Lower leg skin (tissue), 4 donors: ENCODE measurements at regions of chr3 and their contacts with region 1.

Region 1: DNA sequence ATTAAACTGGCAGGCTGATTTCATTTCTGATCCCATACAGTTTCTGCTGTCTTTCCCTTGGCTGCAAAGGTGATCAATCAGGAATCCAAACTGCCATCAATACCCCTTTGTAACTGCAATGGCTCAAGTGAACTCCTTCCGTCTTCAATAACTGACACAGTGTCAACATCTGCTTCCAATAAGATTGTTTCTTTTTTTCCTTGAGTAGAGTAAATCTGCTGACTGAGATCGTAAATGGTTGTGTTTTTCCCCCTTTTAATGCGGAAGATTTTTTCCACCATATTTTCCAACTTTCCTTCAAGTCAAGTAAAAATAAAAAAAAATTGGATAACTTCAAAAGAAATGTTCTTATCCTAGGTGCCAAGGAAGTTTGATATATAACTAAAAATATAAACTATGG is 48.7 kb downstream of the VGLL3 start:
- DNase-seq: no peak
- H3K4me3 ChIP-seq: no peak overlapping the region
- CTCF ChIP-seq: no peak
- POLR2A ChIP-seq: no peak

Region 2: GRCh38 chr3:87004883-87005282 is 62.7 kb after region 1 on chr3:
- intact Hi-C with region 1: loop called (anchors 2 kb)
- DNase-seq: no peak
- H3K4me3 ChIP-seq: no peak overlapping the region
- CTCF ChIP-seq: no peak
- POLR2A ChIP-seq: no peak

Region 3: DNA sequence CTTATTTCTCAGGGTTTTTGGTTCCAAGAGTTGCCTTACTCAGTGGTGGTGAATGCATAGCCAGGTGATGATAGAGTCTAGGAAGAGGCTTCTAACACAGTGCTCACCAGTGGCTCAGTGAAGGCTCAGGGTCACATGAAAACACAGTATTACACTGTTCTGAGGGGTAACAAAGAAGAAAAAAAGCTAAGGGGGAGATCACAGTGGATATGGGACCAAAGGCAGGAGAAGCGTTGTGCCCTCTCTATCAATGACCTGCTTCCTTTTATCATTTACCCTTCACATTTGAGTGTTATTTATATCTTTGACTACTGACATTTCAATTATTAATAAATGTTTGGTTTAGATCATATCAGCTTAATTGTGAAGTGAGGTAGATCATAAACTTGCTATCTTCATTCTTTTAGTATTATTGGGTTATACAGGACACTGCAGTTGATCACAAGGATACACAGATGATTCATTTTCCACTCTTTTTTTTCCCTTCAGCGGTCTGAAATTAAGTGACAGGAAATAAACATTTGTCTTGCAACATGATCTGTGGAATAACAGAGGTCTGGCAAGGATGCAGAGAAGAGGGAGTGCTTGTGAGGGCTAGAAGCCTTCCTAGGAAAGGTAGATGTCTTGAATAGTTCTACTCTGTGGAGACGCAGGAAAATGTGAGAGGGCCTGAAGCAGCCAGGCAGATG is 1379.3 kb after region 1 on chr3:
- intact Hi-C with region 1: no loop called
- DNase-seq: no peak
- H3K4me3 ChIP-seq: no peak overlapping the region
- CTCF ChIP-seq: no peak
- POLR2A ChIP-seq: no peak